ENCODE measurements at regions of chr19 and their contacts with region 1.

Region 1: GRCh38 chr19:23054426-23054825 is 51.5 kb upstream of the ZNF728 start:
- DNase-seq: no peak
- H3K4me3 ChIP-seq: no peak overlapping the region
- H3K27ac ChIP-seq: no peak overlapping the region
- H3K4me1 ChIP-seq: no peaks in the 10 kb centered on the region
- H3K27me3 ChIP-seq: no peaks in the 10 kb centered on the region
- CTCF ChIP-seq: no peak

Region 2: DNA sequence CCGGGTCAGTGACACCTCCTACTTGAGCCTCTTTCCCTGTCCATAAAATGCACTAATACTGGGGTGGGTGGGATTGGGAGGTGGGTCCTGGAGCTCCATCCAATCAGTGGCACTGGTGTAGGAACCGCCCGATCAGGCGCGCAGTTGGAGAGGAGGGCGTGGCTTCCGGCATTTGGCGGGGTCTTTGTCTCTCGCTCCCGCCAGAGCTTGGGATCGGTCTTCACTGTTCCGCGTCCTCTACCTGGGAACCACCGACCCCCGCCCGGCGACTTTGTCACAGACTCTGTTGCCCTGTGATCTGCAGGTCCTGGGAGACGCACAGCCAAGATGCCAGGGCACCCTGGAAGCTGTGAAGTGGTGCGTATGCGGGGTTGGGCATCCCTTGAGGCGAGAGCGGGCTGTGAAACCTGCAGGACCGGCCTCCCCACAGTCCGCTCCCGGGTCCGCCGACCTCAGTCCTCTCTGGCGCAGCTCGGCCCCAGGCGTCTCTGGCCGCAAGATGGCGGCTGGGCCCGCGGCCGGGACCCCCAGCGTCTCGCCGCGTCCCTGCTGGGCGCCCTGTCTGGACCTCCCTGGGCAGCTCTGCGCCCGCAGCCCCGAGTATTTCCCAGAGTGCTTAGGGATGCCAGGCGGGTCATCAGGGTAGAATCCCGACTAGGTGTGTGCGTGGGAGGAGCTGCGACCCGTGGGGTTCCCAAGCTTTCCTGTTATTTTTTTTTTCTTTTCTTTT is 20.8 kb after region 1 on chr19:
- CTCF ChIA-PET with region 1: no interaction called
- POLR2A ChIA-PET with region 1: no interaction called
- intact Hi-C with region 1: loop called (anchors 1 kb)
- DNase-seq: peak; percentile 53 to 61
- H3K4me3 ChIP-seq: peak overlapping the region; percentile 58
- H3K27ac ChIP-seq: no peak overlapping the region
- H3K4me1 ChIP-seq: no peaks in the 10 kb centered on the region
- H3K27me3 ChIP-seq: no peaks in the 10 kb centered on the region
- CTCF ChIP-seq: no peak

Region 3: DNA sequence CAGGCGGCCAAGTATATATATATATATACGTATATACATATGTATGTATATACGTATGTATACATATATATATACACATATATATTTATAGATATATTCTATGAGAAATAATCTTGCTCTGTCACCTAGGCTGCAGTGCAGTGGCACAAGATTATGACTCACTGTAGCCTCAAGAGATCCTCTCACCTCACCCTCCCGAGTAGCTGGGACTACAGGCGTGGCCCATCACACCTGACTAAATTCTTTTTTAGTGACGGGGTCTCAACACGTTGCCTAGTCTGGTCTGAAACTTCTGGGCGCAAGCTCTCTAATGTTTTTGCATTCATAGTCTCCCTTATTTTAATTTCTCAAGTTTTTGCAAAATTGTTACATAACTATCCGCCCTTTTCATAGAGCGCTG is 270.1 kb after region 1 on chr19:
- CTCF ChIA-PET with region 1: no interaction called
- POLR2A ChIA-PET with region 1: no interaction called
- intact Hi-C with region 1: no loop called
- DNase-seq: no peak
- H3K4me3 ChIP-seq: no peak overlapping the region
- H3K27ac ChIP-seq: no peak overlapping the region
- H3K4me1 ChIP-seq: no peaks in the 10 kb centered on the region
- H3K27me3 ChIP-seq: no peaks in the 10 kb centered on the region
- CTCF ChIP-seq: no peak